GM13977 (cell line): ENCODE measurements at regions of chr3 and their contacts with region 1.

Region 1: DNA sequence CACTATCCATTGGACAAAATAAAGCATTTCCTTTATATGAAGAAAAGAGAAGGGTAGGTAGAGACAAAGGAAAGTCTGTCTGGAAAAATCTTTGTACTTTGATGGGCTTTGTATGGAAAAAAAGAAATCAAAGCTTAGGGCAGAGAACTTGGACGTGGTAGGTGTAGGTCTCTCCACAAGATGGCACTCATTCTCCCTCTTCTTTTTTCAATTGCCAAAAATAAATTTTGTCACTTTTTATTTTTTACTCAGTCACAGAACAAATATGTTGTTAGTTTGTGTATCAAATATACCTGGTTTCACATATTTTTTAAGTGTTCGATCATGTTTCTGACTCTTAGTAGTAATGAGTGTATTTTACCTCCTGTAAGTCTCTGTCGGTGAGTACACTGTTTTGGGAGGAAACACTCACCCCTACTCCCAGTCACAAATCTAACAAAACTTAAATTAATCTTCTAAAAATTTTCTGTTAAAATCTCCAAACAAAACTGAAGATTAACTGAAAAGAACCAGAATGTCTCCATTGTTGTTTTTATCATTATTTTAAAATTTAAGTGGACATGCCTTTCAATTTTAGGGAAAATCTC is 415.8 kb upstream of the GOLIM4 start:
- DNase-seq: no peak
- CTCF ChIP-seq: peak; percentile 46

Region 2: DNA sequence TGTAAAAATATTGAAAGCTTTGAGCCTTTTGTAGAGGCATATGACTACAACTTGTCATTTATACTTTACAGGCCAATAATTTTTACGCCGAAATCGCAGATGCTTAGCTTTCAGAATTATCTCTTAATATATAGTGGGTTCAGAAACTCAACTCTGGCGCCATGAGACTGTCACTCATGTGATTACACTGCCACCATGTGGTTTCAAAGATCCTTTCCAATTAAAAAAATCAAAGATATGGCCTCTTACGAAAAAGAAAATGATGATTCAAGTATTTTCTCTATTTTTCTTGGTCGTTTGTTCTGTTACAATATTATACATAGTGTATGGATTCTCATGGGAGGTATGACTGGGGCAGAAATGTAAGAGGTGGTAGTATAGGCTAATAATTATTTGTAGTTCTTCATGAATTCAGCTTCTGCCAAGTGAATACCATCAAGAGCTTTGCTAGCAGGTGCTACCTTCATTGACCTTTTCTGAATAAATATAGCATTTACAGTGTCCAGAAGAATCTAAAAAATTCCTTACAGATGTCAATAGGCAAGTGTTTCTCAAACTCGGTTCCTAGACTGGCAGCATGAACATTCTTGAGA is 335.9 kb after region 1 on chr3:
- in situ Hi-C with region 1: loop called (anchors 25 kb)
- DNase-seq: peak; percentile 17
- CTCF ChIP-seq: peak; percentile 57

Region 3: GRCh38 chr3:168862466-168862865 is 350.9 kb after region 1 on chr3:
- in situ Hi-C with region 1: no loop called
- DNase-seq: no peak
- CTCF ChIP-seq: no peak